ENCODE measurements at regions of chr16 and their contacts with region 1.

Region 1: DNA sequence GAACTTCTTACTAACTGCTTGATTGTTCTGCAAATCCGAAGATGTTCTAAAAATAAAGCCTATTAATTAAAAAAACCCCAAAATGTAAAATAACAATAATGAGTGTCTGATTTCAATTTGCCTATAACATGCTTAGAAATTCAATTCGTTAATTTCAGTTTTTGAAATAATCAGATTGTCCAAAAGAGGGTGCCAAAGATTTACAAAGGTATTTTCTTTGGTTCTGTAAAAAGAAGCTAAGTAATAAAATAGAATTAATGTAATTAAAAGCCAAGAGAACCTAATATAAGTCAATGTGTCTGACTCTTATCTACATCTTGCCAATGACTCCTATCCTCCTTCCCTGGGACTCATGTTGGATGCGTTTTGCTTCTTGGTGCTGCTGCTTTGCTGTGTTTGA is 75.0 kb upstream of the CPHXL start:
- DNase-seq: no peak
- ATAC-seq: no peak
- H3K4me3 ChIP-seq: no peak overlapping the region
- H3K27ac ChIP-seq: no peak overlapping the region
- H3K4me1 ChIP-seq: no peaks in the 10 kb centered on the region
- H3K27me3 ChIP-seq: peaks cover 0 to 5% of the 10 kb centered on the region in 2 experiments; a peak in 1 of 5 replicates
- CTCF ChIP-seq: peak in 1 of 3 experiments; percentile 53; a peak in 2 of 6 replicates
- EP300 ChIP-seq: no peak
- POLR2A ChIP-seq: no peak
- RAD21 ChIP-seq: peak; percentile 61 to 66

Region 2: GRCh38 chr16:75606507-75606906 is 194.8 kb before region 1 on chr16:
- CTCF ChIA-PET with region 1: no interaction called
- POLR2A ChIA-PET with region 1: no interaction called
- in situ Hi-C with region 1: no loop called
- intact Hi-C with region 1: no loop called
- DNase-seq: no peak
- ATAC-seq: no peak
- H3K4me3 ChIP-seq: no peak overlapping the region
- H3K27ac ChIP-seq: no peak overlapping the region
- H3K4me1 ChIP-seq: no peaks in the 10 kb centered on the region
- H3K27me3 ChIP-seq: no peaks in the 10 kb centered on the region
- CTCF ChIP-seq: no peak
- EP300 ChIP-seq: no peak
- POLR2A ChIP-seq: no peak
- RAD21 ChIP-seq: no peak

Region 3: GRCh38 chr16:75919664-75920063 is 118.4 kb after region 1 on chr16:
- CTCF ChIA-PET with region 1: no interaction called
- POLR2A ChIA-PET with region 1: no interaction called
- in situ Hi-C with region 1: no loop called
- intact Hi-C with region 1: loop called (anchors 10 kb)
- DNase-seq: no peak
- ATAC-seq: no peak
- H3K4me3 ChIP-seq: no peak overlapping the region
- H3K27ac ChIP-seq: no peak overlapping the region
- H3K4me1 ChIP-seq: no peaks in the 10 kb centered on the region
- H3K27me3 ChIP-seq: no peaks in the 10 kb centered on the region
- CTCF ChIP-seq: no peak
- EP300 ChIP-seq: no peak
- POLR2A ChIP-seq: no peak
- RAD21 ChIP-seq: no peak

Measured in K562 (cell line).